ENCODE measurements at regions of chr19 and their contacts with region 1.

Region 1: DNA sequence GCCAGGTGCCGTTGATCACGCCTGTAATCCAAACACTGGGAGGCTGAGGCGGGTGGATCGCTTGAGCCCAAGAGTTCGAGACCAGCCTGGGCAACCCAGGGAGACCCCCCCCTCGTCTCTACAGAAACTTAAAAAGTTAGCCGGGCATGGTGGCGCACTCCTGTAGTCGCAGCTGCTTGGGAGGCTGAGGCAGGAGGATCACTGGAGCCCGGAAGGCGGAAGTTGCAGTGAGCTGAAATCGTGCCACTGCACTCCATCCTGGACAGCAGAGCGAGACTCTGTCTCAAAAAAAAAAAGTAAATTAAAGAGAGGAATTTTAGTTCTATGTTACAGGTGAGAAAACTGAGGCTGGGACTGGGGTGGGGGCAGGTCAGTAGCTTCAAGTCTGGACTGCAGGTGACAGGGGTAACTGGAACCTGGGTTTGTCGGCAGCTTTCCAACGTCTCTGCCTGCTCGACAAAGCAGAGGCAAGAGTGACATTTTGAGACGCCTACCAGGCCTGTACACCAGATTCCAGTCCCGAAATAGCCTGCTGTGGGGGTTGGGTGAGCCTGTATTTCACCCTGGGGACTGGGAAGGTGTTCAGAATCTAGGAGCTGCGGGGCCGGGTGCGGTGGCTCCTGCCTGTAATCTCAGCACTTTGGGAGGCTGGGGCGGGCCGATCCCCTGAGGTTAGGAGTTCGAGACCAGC is 1.2 kb downstream of the SELENOW start:
- DNase-seq: peak in 4 of 6 donors; percentile 38 to 66 (median 48)
- ATAC-seq: peak in 2 of 4 donors; percentile 20 to 28
- H3K4me3 ChIP-seq: peak overlapping the region; percentile 74 to 89 (median 83)
- H3K27ac ChIP-seq: peak overlapping the region in 2 of 4 donors; percentile 98
- H3K4me1 ChIP-seq: peaks cover 0 to 23% (median 5%) of the 10 kb centered on the region in 3 donors
- H3K27me3 ChIP-seq: no peaks in the 10 kb centered on the region
- CTCF ChIP-seq: no peak

Region 2: GRCh38 chr19:47658431-47659348 is 121.0 kb before region 1 on chr19:
- intact Hi-C with region 1: no loop called
- DNase-seq: peak in 1 of 6 donors; percentile 7
- ATAC-seq: peak in 3 of 4 donors; percentile 24 to 31 (median 26)
- H3K4me3 ChIP-seq: no peak overlapping the region
- H3K27ac ChIP-seq: peak overlapping the region in 1 of 4 donors; percentile 47
- H3K4me1 ChIP-seq: peaks cover 0 to 10% (median 0%) of the 10 kb centered on the region in 3 donors
- H3K27me3 ChIP-seq: no peaks in the 10 kb centered on the region
- CTCF ChIP-seq: no peak

Region 3: GRCh38 chr19:47713046-47714021 is 66.3 kb before region 1 on chr19 and contains the start of gene EHD2:
- intact Hi-C with region 1: loop called in 2 of 3 experiments (anchors 10 kb)
- DNase-seq: peak; percentile 53 to 90 (median 79)
- ATAC-seq: peak; percentile 91 to 97 (median 94)
- H3K4me3 ChIP-seq: peak within 1 kb of the TSS; percentile 29 to 73 (median 68)
- H3K27ac ChIP-seq: peak within 1 kb of the TSS; percentile 16 to 72 (median 58)
- H3K4me1 ChIP-seq: no peaks in the 10 kb centered on the region
- H3K27me3 ChIP-seq: no peaks in the 10 kb centered on the region
- CTCF ChIP-seq: peak; percentile 87 to 96 (median 96)
- total RNA-seq, gene EHD2: 14.8 to 28.3 (median 21.6) TPM